A549 (cell line): ENCODE measurements at regions of chr10 and their contacts with region 1.

Region 1: GRCh38 chr10:122112625-122113160 is 123.7 kb downstream of the TACC2 start:
- DNase-seq: peak; percentile 93 to 96
- ATAC-seq: peak; percentile 89
- H3K4me3 ChIP-seq: peak overlapping the region; percentile 95
- H3K27ac ChIP-seq: peak overlapping the region; percentile 98
- H3K4me1 ChIP-seq: peaks cover 43% of the 10 kb centered on the region
- CTCF ChIP-seq: peak; percentile 62
- EP300 ChIP-seq: no peak; a peak in 1 of 5 replicates
- POLR2A ChIP-seq: peak; percentile 70
- RAD21 ChIP-seq: peak; percentile 69 to 82

Region 2: DNA sequence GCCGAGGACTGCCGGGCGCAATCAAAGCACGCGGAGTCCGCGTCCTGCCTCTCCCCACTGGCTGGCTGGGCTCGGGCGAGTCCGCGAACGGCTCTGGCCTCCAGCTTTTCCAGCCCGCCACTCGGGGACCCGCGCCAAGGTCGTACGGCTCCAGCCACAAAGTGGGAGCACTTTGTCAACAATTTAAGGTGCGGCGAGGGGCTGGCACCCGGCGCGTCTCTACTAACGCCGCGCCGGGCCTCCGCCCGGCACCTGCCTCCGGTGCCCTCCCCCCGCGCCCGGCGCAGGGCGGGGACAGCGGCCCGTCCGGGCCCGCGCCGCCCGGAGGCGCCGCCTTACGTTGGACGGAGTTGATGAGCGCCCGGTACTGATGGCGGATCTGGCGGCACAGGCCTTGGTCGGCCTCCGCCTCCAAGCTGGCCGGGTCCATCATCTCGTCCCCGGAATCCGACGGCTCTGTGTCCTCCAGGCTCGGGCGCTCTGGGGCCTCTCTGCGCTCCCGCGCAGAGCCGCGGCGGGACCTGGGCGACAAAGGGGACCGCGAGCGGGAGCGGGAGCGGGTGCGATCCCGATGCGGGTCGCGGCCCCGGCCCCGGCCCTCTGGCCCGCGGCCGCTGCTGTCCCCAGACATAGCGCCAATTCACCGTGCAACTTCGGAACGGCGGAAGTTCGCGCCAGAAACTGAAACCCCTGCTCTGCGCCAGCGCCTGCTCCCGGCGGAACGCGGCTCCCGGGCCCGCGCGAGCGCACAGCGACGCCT is 138.0 kb before region 1 on chr10 and contains the start of gene NSMCE4A:
- CTCF ChIA-PET with region 1: interaction called, 18 read pairs
- POLR2A ChIA-PET with region 1: interaction called, 3 read pairs
- DNase-seq: peak; percentile 85 to 90
- ATAC-seq: peak; percentile 91 to 94
- H3K4me3 ChIP-seq: peak within 1 kb of the TSS; percentile 81
- H3K27ac ChIP-seq: peak within 1 kb of the TSS; percentile 97 to 99
- H3K4me1 ChIP-seq: peaks cover 14% of the 10 kb centered on the region; the same call in 2 of the 3 replicates
- CTCF ChIP-seq: peak; percentile 75
- EP300 ChIP-seq: no peak
- POLR2A ChIP-seq: peak; percentile 52
- RAD21 ChIP-seq: peak; percentile 16 to 39; a peak in 2 of 5 replicates
- polyA plus RNA-seq, gene NSMCE4A: 135 and 172 TPM in 2 replicates

Region 3: GRCh38 chr10:122040786-122041185 is 71.9 kb before region 1 on chr10:
- CTCF ChIA-PET with region 1: interaction called, 20 read pairs
- POLR2A ChIA-PET with region 1: no interaction called
- DNase-seq: no peak
- ATAC-seq: peak in 1 of 2 experiments; percentile 31; a peak in 3 of 6 replicates
- H3K4me3 ChIP-seq: no peak overlapping the region
- H3K27ac ChIP-seq: peak overlapping the region in 1 of 2 experiments; percentile 2; a peak in 1 of 6 replicates
- H3K4me1 ChIP-seq: peaks cover 23% of the 10 kb centered on the region
- CTCF ChIP-seq: no peak
- EP300 ChIP-seq: no peak
- POLR2A ChIP-seq: no peak
- RAD21 ChIP-seq: no peak

Region 4: DNA sequence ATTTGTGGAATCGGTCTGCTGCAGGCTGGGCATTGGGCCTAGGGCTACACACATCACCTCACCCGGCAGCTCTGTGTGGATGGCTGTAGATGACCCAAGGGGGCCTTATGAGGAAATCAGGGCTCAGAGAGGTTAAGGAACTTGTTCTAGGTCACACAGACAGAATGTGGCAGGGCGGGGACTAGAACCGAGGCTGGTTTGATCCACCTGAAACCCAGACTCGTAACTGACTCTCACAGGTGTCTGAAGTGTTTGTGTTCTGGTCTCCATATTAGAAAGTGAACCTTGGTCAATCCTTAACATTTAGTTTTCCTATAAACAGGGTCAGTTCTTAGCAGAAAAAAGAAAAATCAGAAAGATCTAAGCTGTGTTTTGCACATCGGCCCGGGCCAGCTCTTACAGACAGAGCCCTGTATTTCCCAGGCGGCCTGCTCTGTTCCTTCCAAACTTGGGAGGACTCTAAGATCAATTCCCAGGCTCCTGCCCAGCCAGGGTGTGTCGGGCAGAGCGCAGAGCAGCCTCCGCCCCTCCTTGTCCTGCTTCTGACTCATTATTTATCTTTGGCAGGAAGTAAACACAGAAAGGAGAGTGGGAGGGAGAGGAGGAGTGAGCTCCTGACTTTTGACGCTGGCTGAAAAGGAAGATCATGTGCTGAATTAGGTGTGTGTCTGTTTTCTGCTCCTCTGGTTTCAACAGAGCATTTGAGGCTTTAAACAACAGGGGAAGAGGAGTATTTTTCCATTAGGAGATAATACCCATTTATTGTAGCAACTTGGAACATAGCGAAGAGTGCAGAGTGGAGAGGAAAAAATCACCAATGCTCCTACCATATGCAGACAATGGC is 49.6 kb before region 1 on chr10:
- CTCF ChIA-PET with region 1: interaction called, 45 read pairs
- POLR2A ChIA-PET with region 1: interaction called, 20 read pairs
- DNase-seq: peak; percentile 95 to 99
- ATAC-seq: peak; percentile 98 to 100
- H3K4me3 ChIP-seq: no peak overlapping the region
- H3K27ac ChIP-seq: peak overlapping the region; percentile 97 to 98
- H3K4me1 ChIP-seq: peaks cover 56% of the 10 kb centered on the region
- CTCF ChIP-seq: no peak
- EP300 ChIP-seq: peak; percentile 92 to 95
- POLR2A ChIP-seq: no peak
- RAD21 ChIP-seq: peak; percentile 36 to 57; a peak in 4 of 5 replicates

Region 5: GRCh38 chr10:122089311-122090017 is 23.2 kb before region 1 on chr10:
- CTCF ChIA-PET with region 1: interaction called, 14 read pairs
- POLR2A ChIA-PET with region 1: interaction called, 3 read pairs
- DNase-seq: peak in 1 of 2 experiments; percentile 34
- ATAC-seq: peak in 1 of 2 experiments; percentile 68; a peak in 3 of 6 replicates
- H3K4me3 ChIP-seq: no peak overlapping the region
- H3K27ac ChIP-seq: peak overlapping the region in 1 of 2 experiments; percentile 62; a peak in 3 of 6 replicates
- H3K4me1 ChIP-seq: 0 out of 3 replicates have a peak, but pooled peaks cover 3% of the 10 kb centered on the region
- CTCF ChIP-seq: no peak
- EP300 ChIP-seq: no peak
- POLR2A ChIP-seq: no peak
- RAD21 ChIP-seq: peak in 1 of 2 experiments; percentile 33; a peak in 2 of 5 replicates

Region 6: GRCh38 chr10:122126763-122127659 is 14.3 kb after region 1 on chr10:
- CTCF ChIA-PET with region 1: interaction called, 23 read pairs
- POLR2A ChIA-PET with region 1: interaction called, 8 read pairs
- DNase-seq: peak; percentile 72 to 80
- ATAC-seq: peak; percentile 80 to 83
- H3K4me3 ChIP-seq: peak overlapping the region; percentile 15; the same call in 1 of the 3 replicates
- H3K27ac ChIP-seq: peak overlapping the region; percentile 72 to 81
- H3K4me1 ChIP-seq: peaks cover 67% of the 10 kb centered on the region
- CTCF ChIP-seq: no peak
- EP300 ChIP-seq: no peak
- POLR2A ChIP-seq: no peak
- RAD21 ChIP-seq: no peak

Region 7: DNA sequence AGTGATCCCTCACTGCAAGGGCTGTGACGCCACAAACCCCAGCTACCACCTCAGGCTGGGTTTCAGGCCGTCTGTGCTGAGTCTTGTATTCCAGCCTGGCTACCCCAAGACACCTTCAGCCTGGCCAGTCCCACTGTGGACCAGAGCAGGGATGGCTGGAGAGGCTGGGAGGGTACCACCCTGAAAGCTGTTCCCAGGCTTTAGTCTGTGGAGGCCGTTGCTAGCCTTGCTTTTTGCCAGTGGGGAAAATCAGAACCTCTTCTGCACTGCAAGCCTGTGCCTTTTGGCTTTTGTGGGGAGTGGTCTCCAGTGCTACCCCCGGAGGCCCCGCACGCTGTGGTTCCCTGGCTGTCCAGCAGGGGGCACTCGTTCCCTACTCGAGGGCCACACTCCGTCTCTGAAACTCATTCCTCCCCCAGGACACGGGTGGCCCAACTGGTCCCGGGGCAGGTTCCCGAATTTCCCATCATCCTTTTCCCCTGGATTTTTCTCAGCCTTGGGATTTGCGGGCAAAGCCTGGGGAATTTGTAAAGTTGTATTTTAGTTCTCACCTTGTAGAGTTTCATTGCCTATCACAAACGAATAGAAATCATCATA is 30.0 kb after region 1 on chr10:
- CTCF ChIA-PET with region 1: interaction called, 35 read pairs
- POLR2A ChIA-PET with region 1: interaction called, 20 read pairs
- DNase-seq: peak in 1 of 2 experiments; percentile 49
- ATAC-seq: peak; percentile 1 to 24; a peak in 3 of 6 replicates
- H3K4me3 ChIP-seq: no peak overlapping the region
- H3K27ac ChIP-seq: peak overlapping the region; percentile 88 to 92
- H3K4me1 ChIP-seq: peaks cover 80% of the 10 kb centered on the region
- CTCF ChIP-seq: peak; percentile 91
- EP300 ChIP-seq: no peak
- POLR2A ChIP-seq: no peak
- RAD21 ChIP-seq: peak; percentile 81 to 86